Activated CD8-positive, alpha-beta T cell treated with anti-CD3 and anti-CD28 coated beads for 36 hours (primary cell): ENCODE measurements at regions of chr16 and their contacts with region 1.

Region 1: DNA sequence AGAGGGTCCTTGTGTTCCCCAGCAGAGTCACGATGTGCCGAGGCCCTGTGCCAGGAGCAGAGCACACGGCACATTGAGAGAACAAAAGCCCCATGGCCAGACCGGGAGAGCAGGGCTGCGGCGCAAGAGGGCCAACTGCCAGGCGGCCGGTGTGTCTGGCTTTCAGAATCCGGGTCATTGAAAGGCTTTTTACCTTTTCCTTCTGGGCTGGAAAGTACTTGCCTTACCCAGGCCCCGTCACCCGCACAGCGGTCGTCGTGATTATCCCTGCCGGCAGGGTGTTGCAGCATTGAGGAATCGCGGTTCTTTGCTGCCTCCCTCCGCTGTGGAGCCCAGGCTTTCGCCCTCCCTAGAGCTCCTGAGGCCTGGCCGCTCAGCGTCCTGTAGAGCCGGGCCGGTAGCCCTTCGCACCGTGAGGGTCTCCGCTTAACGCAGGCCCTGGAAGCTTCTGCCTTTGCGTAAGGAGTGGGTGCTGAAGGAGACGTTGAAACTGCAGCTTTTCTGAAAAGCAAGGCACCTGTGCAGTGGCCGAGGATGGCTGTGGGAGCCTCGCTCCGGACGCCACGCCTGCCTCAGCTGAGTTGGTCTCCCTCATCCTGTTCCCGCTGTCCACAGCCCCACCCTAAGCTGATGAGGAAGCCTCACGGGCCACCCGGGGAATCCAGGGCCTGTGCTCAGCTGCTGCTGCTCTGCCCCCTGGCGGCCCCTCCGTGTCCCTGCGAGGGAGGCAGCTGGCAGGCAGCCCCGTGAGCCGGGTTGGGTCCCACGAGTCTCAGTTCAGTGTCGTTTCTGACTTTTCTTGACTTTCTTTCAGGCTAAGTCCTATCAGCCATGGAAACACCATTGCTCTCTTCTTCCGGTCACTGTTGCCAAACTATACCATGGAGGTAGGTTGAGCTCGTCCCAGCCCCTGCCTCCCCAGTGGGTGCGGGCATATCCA is 8.6 kb upstream of the MC1R start:
- DNase-seq: peak; percentile 77
- ATAC-seq: peak; percentile 88
- H3K4me3 Mint-ChIP-seq: no peak overlapping the region
- H3K27ac Mint-ChIP-seq: no peak overlapping the region
- H3K4me1 Mint-ChIP-seq: peaks cover 4% of the 10 kb centered on the region
- H3K27me3 Mint-ChIP-seq: no peaks in the 10 kb centered on the region
- CTCF ChIP-seq: peak; percentile 91

Region 2: GRCh38 chr16:89873972-89874689 is 35.9 kb before region 1 on chr16:
- CTCF ChIA-PET with region 1: interaction called, 16 read pairs
- POLR2A ChIA-PET with region 1: interaction called, 8 read pairs
- intact Hi-C with region 1: no loop called
- DNase-seq: peak; percentile 98
- ATAC-seq: peak; percentile 86
- H3K4me3 Mint-ChIP-seq: peak overlapping the region; percentile 81
- H3K27ac Mint-ChIP-seq: peak overlapping the region; percentile 97
- H3K4me1 Mint-ChIP-seq: peaks cover 16% of the 10 kb centered on the region
- H3K27me3 Mint-ChIP-seq: no peaks in the 10 kb centered on the region
- CTCF ChIP-seq: no peak

Region 3: GRCh38 chr16:89887243-89887642 is 22.8 kb before region 1 on chr16:
- CTCF ChIA-PET with region 1: interaction called, 16 read pairs
- POLR2A ChIA-PET with region 1: interaction called, 3 read pairs
- intact Hi-C with region 1: no loop called
- DNase-seq: no peak
- ATAC-seq: no peak
- H3K4me3 Mint-ChIP-seq: no peak overlapping the region
- H3K27ac Mint-ChIP-seq: no peak overlapping the region
- H3K4me1 Mint-ChIP-seq: peaks cover 12% of the 10 kb centered on the region
- H3K27me3 Mint-ChIP-seq: no peaks in the 10 kb centered on the region
- CTCF ChIP-seq: no peak

Region 4: GRCh38 chr16:89922884-89923690 is 13.0 kb after region 1 on chr16 and contains the start of gene TUBB3:
- CTCF ChIA-PET with region 1: interaction called, 18 read pairs
- POLR2A ChIA-PET with region 1: interaction called, 9 read pairs
- intact Hi-C with region 1: no loop called
- DNase-seq: peak; percentile 60
- ATAC-seq: peak; percentile 21
- H3K4me3 Mint-ChIP-seq: peak within 1 kb of the TSS; percentile 51
- H3K27ac Mint-ChIP-seq: no peak within 1 kb of the TSS
- H3K4me1 Mint-ChIP-seq: peaks cover 37% of the 10 kb centered on the region
- H3K27me3 Mint-ChIP-seq: peaks cover 49% of the 10 kb centered on the region
- CTCF ChIP-seq: no peak
- total RNA-seq, gene TUBB3: 0.27 to 1.2 TPM

Region 5: GRCh38 chr16:89966756-89967155 is 56.7 kb after region 1 on chr16:
- CTCF ChIA-PET with region 1: no interaction called
- POLR2A ChIA-PET with region 1: no interaction called
- intact Hi-C with region 1: no loop called
- DNase-seq: no peak
- ATAC-seq: no peak
- H3K4me3 Mint-ChIP-seq: no peak overlapping the region
- H3K27ac Mint-ChIP-seq: no peak overlapping the region
- H3K4me1 Mint-ChIP-seq: peaks cover 9% of the 10 kb centered on the region
- H3K27me3 Mint-ChIP-seq: no peaks in the 10 kb centered on the region
- CTCF ChIP-seq: no peak